WTC11 (cell line): ENCODE measurements at regions of chr13 and their contacts with region 1.

Region 1: DNA sequence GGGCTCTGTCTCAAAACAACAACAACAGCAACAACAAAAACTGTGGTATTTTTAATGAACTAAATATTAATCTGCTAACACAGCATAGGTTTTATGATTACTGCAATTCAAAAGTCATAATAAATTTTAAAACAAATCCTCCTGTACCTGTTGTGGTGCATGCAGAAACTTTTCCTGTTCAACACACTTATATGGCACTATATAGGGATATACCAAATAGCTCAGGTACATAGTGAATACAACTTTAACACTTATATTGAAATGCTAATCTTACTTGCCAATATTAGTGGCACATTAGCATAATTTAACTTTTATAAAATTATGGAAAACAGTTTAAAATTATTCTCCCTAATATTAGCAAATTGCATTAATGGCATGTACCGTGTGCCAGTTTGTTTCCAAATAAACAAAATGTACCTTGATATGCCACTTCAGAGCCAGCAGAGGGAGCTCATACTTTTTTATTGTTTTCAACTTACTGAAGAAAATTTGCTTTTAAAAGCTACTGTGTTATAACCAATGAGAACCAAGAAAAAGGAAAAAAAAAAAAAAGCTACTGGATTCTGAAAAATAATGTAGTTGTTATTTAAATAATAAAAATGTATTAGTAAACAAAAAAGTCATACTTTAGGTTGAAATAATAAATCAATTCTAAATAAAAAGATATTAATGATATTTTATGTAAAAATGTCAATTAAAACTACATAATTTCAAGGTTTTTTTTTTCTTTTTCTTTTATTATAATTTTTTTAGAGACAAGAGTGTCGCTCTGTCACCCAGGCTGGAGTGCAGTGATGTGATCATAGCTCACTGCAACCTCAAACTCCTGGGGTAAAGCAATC is 18.0 kb upstream of the RBM26 start:
- DNase-seq: no peak
- ATAC-seq: peak; percentile 34; the same call in 1 of the 2 replicates
- H3K4me3 Mint-ChIP-seq: no peak overlapping the region
- H3K27ac Mint-ChIP-seq: no peak overlapping the region
- H3K4me1 Mint-ChIP-seq: no peaks in the 10 kb centered on the region
- H3K27me3 Mint-ChIP-seq: no peaks in the 10 kb centered on the region
- CTCF ChIP-seq: peak; percentile 50

Region 2: DNA sequence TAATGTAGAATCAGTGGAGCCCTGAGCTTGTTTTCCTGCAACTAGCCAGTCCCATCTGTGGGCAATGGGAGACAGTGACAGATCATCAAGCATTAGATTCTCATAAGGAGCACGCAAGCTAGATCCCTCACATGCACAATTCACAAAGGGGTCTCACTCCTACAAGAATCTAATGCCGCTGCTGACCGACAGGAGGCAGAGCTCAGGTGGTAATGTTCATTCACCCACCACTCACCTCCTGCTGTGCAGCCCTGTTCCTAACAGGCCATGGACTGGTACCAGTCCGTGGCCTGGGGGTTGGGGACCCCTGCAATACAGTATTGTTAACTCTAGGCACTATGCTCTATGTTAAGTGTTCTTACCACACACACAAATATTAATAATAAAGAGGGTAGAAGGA is 380.8 kb before region 1 on chr13:
- CTCF ChIA-PET with region 1: no interaction called
- POLR2A ChIA-PET with region 1: no interaction called
- DNase-seq: no peak
- ATAC-seq: no peak
- H3K4me3 Mint-ChIP-seq: no peak overlapping the region
- H3K27ac Mint-ChIP-seq: no peak overlapping the region
- H3K4me1 Mint-ChIP-seq: no peaks in the 10 kb centered on the region
- H3K27me3 Mint-ChIP-seq: peaks cover under 1% of the 10 kb centered on the region; the same call in 1 of the 2 replicates
- CTCF ChIP-seq: no peak

Region 3: DNA sequence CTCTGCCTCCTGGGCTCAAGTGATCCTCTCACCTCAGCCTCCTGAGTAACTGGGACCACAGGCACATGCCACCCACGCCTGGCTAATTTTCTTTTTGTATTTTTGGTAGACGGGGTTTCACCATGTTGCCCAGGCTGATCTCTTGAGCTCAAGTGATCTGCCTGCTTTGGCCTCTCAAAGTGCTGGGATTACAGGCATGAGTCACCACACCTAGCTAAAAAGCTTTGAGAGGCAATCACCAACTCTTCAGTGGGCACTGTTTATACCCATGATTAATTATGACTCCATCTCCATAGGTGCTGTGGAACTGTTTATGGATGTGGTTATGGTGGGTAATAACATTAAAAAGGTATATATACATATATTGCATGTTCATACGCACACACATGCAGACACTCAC is 10.5 kb before region 1 on chr13:
- CTCF ChIA-PET with region 1: interaction called, 12 read pairs
- POLR2A ChIA-PET with region 1: no interaction called
- DNase-seq: no peak
- ATAC-seq: no peak
- H3K4me3 Mint-ChIP-seq: no peak overlapping the region
- H3K27ac Mint-ChIP-seq: no peak overlapping the region
- H3K4me1 Mint-ChIP-seq: no peaks in the 10 kb centered on the region
- H3K27me3 Mint-ChIP-seq: no peaks in the 10 kb centered on the region
- CTCF ChIP-seq: no peak

Region 4: GRCh38 chr13:79445968-79446645 is 22.1 kb after region 1 on chr13:
- CTCF ChIA-PET with region 1: interaction called, 15 read pairs
- POLR2A ChIA-PET with region 1: no interaction called
- DNase-seq: peak; percentile 35
- ATAC-seq: peak; percentile 98
- H3K4me3 Mint-ChIP-seq: no peak overlapping the region
- H3K27ac Mint-ChIP-seq: no peak overlapping the region
- H3K4me1 Mint-ChIP-seq: peaks cover 25% of the 10 kb centered on the region
- H3K27me3 Mint-ChIP-seq: no peaks in the 10 kb centered on the region
- CTCF ChIP-seq: no peak

Region 5: GRCh38 chr13:79501538-79502232 is 77.7 kb after region 1 on chr13:
- CTCF ChIA-PET with region 1: interaction called, 10 read pairs
- POLR2A ChIA-PET with region 1: no interaction called
- DNase-seq: no peak
- ATAC-seq: no peak
- H3K4me3 Mint-ChIP-seq: no peak overlapping the region
- H3K27ac Mint-ChIP-seq: no peak overlapping the region
- H3K4me1 Mint-ChIP-seq: peaks cover 9% of the 10 kb centered on the region
- H3K27me3 Mint-ChIP-seq: no peaks in the 10 kb centered on the region
- CTCF ChIP-seq: no peak

Region 6: DNA sequence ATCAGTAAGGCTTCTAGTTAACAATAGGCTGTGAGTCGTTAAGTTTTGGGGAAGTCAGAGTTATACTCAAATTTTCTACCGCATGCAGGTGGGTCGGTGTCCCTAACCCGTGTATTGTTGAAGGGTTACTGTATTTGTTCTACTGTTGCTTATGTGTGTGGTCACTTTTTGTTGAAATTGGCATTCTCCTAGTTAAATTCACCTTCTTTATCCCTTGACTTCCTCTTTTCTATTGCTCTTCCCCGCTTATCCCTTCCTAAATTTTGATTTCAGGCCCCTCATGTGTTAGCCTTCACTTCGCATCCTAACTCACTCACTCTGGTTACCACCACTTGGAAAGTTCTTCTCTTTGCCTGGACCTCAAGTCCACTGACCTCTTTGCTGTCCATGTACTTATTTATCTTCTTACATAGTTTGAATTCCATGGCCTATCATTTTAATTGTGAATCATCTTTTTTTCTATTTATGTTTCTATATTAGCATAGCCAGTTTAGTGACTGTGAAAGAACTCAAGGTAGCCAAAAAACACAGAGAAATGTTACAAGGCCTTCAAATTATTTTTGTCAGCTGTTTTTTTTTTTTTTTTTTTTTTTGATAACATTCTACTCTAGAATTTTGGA is 109.9 kb after region 1 on chr13:
- CTCF ChIA-PET with region 1: interaction called, 54 read pairs
- POLR2A ChIA-PET with region 1: no interaction called
- DNase-seq: no peak
- ATAC-seq: no peak
- H3K4me3 Mint-ChIP-seq: no peak overlapping the region
- H3K27ac Mint-ChIP-seq: 0 out of 2 replicates have a peak overlapping the region, but pooled peaks have one; percentile 1
- H3K4me1 Mint-ChIP-seq: peaks cover 43% of the 10 kb centered on the region
- H3K27me3 Mint-ChIP-seq: no peaks in the 10 kb centered on the region
- CTCF ChIP-seq: no peak

Region 7: DNA sequence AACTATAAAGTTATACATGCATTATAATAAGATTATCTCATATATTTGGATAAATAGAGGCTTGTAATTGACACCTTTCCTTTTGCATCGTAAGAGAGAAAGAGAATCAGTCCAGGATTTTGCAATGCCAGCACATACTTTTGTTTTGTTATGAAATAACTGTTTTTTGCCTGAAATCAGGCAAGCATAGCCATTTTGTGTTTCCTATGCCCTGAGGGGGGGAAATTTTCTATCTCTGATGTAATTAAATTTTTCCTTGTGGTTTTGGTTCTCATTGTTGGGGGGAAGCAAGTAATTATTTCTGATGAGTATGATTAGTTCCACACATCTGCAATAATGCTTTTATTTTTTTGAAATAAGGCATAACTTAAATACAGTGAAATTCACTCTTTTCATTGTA is 286.4 kb after region 1 on chr13:
- CTCF ChIA-PET with region 1: no interaction called
- POLR2A ChIA-PET with region 1: no interaction called
- DNase-seq: no peak
- ATAC-seq: no peak
- H3K4me3 Mint-ChIP-seq: no peak overlapping the region
- H3K27ac Mint-ChIP-seq: no peak overlapping the region
- H3K4me1 Mint-ChIP-seq: no peaks in the 10 kb centered on the region
- H3K27me3 Mint-ChIP-seq: no peaks in the 10 kb centered on the region
- CTCF ChIP-seq: no peak

Region 8: GRCh38 chr13:79724348-79725103 is 300.5 kb after region 1 on chr13:
- CTCF ChIA-PET with region 1: no interaction called
- POLR2A ChIA-PET with region 1: no interaction called
- DNase-seq: no peak
- ATAC-seq: no peak
- H3K4me3 Mint-ChIP-seq: no peak overlapping the region
- H3K27ac Mint-ChIP-seq: no peak overlapping the region
- H3K4me1 Mint-ChIP-seq: peaks cover 5% of the 10 kb centered on the region
- H3K27me3 Mint-ChIP-seq: no peaks in the 10 kb centered on the region
- CTCF ChIP-seq: no peak